AG04450 (cell line): ENCODE measurements at regions of chr18 and their contacts with region 1.

Region 1: DNA sequence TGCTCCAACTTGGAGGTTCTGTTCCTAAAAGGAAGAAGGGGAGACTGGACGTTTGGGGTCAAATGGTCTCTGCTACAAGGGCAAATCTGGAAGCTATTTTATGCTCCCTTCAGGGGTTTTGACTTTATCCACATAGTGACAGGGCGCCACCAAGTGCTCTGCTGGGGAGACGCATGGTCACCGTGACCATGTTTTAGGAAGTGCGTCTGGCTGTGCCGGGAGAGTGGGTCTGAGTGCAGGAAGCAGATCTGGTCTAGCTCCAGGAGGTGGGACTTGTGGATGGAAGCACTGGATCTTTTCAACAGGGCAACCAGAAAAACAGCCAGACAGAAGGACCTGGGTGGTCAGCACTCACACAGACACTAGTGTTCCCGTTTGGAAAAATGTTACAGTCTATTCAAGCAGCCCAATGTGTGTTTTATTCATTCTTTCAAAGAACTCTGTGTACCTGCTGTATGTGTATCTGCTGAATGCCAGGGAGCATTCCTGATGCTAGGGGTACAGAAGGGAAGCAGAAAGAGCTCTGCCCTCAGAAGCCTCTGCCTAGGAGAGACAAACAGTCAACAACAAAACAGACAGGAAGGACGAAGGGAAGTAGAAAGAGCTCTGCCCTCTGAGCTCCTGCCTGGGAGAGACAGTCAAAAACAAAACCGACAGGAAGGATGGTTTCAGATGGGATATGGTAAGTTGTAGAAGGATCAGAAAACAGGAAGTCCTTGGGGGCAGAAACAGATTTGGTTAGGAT is 14.3 kb downstream of the IMPA2 start:
- DNase-seq: peak; percentile 48
- H3K4me3 ChIP-seq: no peak overlapping the region
- H3K27ac ChIP-seq: no peak overlapping the region
- H3K27me3 ChIP-seq: no peaks in the 10 kb centered on the region
- CTCF ChIP-seq: peak; percentile 75

Region 2: DNA sequence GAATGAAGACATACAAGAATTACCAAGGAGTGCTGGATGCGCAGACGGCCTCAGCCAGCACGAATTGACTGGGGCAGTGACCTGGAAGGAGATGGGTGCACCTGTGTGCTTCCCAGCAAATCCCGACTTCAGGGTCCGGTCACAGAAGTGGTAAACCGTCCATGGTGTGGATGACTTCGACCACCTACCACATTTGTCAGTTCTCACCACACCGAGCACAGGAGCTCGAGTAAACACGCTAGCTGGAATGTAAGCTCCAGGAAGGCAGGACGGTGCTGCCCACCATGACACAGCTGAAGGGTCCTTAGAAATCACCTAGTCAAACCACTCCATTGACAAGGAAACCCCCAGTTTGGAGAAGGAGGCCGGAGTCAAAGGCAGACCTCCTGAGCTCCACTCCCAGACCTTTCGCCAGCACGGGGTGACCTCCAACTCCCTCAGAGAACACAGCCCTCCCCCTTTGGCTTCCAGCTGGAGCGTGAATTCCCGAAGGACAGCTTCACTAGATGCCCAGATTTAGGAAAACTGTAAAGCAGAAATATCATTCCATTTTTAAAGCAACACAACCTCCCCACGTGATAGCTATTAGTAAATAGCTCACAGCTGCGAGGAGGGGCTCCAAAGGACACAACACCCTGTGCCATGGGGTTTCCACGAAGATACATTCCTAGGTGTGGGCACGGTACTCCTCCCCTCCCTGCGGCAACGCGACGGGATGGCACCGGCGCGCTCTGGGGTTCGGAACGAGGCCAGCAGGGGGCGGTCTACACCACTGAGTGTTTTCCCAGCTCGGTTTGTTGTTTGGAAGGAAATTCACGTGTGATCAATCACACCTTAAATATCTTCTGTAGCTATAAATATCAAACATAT is 340.6 kb before region 1 on chr18:
- CTCF ChIA-PET with region 1: interaction called, 28 read pairs
- POLR2A ChIA-PET with region 1: no interaction called
- DNase-seq: no peak
- H3K4me3 ChIP-seq: no peak overlapping the region
- H3K27ac ChIP-seq: no peak overlapping the region
- H3K27me3 ChIP-seq: peaks cover 4% of the 10 kb centered on the region
- CTCF ChIP-seq: peak; percentile 74

Region 3: GRCh38 chr18:11925800-11926481 is 69.7 kb before region 1 on chr18:
- CTCF ChIA-PET with region 1: interaction called, 12 read pairs
- POLR2A ChIA-PET with region 1: no interaction called
- DNase-seq: no peak
- H3K4me3 ChIP-seq: no peak overlapping the region
- H3K27ac ChIP-seq: no peak overlapping the region
- H3K27me3 ChIP-seq: peaks cover 8% of the 10 kb centered on the region
- CTCF ChIP-seq: no peak

Region 4: GRCh38 chr18:11980555-11981382 is 14.8 kb before region 1 on chr18:
- CTCF ChIA-PET with region 1: interaction called, 15 read pairs
- POLR2A ChIA-PET with region 1: interaction called, 23 read pairs
- DNase-seq: peak; percentile 95
- H3K4me3 ChIP-seq: peak overlapping the region; percentile 68
- H3K27ac ChIP-seq: peak overlapping the region; percentile 87
- H3K27me3 ChIP-seq: no peaks in the 10 kb centered on the region
- CTCF ChIP-seq: peak; percentile 29; the same call in 1 of the 2 replicates

Region 5: DNA sequence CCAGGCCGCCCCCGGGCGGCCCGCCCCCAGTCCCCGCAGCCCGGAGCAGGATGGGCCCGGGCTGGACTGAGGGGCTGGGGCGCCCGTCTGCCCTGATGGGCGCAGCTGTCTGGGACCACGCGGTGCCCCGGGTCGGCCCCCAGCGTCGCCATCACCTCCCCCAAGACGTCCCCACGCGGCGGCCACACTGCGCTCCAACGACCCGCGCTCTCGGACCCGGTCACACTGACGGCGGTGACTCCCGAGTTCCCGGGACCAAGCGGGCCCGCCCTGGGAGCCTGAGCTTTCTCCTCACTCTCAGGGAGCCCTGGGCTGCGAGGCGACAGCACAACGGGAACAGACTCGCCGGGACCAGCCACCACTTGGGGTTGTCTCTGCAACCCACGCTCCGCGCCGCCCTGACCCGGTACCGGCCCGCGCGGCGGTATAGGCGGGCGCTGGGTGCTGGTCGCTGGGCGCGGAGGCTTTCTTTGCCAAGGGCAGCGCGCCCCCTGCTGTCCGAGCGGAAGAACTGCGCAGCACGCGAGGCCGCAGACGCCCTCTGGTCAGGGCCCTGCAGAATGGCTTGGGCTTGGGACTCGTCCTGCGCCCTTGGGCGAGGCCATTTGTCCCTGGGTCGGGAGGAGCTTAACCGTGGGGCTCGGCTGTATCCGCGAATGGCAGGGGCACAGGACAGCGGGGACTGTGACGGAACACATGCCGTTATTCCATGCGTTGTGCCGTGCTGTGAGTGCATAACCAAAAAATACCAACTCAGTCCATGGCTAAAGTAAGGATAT is 43.2 kb after region 1 on chr18:
- CTCF ChIA-PET with region 1: interaction called, 28 read pairs
- POLR2A ChIA-PET with region 1: no interaction called
- DNase-seq: peak; percentile 41
- H3K4me3 ChIP-seq: peak overlapping the region; percentile 63
- H3K27ac ChIP-seq: no peak overlapping the region
- H3K27me3 ChIP-seq: no peaks in the 10 kb centered on the region
- CTCF ChIP-seq: peak; percentile 93